Head of caudate nucleus (tissue), 42 donors: ENCODE measurements at regions of chrX and their contacts with region 1.

Region 1: GRCh38 chrX:24150051-24150790 is 692 bp downstream of the ZFX start:
- DNase-seq: peak; percentile 55 to 96 (median 91)

Region 2: GRCh38 chrX:24054182-24055042 is 95.8 kb before region 1 on chrX and contains the start of gene EIF2S3:
- intact Hi-C with region 1: loop called (anchors 1 kb)
- DNase-seq: peak; percentile 75 to 96 (median 88)

Region 3: DNA sequence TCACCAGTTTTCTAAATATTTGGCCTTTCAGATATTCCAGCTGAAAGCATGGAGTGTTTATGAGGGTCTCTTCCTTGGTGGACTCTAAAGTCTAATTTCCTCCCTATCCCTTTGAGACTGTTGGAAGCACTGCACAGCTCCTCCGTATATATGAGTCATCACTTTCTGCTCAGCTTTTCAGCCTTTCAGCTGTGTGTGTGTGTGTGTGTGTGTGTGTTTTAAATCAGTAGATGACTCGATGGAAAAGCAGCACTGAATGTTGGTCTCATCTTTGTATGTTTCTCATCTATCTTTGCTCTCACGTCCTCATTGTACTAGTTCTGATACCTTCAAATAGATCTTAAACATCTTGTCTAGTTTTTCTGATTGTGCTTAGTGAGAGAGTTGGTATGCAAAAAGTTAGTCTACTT is 80.9 kb after region 1 on chrX:
- intact Hi-C with region 1: loop called (anchors 10 kb)
- DNase-seq: peak in 10 of 42 donors; percentile 8 to 54 (median 26)